B cell (primary cell): ENCODE measurements at regions of chr14 and their contacts with region 1.

Region 1: GRCh38 chr14:64503478-64504309 is at the start of gene ZBTB25:
- DNase-seq: peak; percentile 99
- ATAC-seq: peak; percentile 64
- H3K4me3 ChIP-seq: peak within 1 kb of the TSS; percentile 87 to 98 (median 95)
- H3K4me3 Mint-ChIP-seq: peak within 1 kb of the TSS; percentile 95
- H3K27ac ChIP-seq: peak within 1 kb of the TSS; percentile 99 to 100
- H3K27ac Mint-ChIP-seq: peak within 1 kb of the TSS; percentile 100
- H3K4me1 ChIP-seq: peaks cover 63 to 65% of the 10 kb centered on the region in 2 donors
- H3K4me1 Mint-ChIP-seq: peaks cover 61% of the 10 kb centered on the region
- H3K27me3 ChIP-seq: no peaks in the 10 kb centered on the region
- H3K27me3 Mint-ChIP-seq: no peaks in the 10 kb centered on the region
- CTCF ChIP-seq: no peak
- total RNA-seq, gene ZBTB25: 45.7 and 51.0 TPM in 2 replicates

Region 2: DNA sequence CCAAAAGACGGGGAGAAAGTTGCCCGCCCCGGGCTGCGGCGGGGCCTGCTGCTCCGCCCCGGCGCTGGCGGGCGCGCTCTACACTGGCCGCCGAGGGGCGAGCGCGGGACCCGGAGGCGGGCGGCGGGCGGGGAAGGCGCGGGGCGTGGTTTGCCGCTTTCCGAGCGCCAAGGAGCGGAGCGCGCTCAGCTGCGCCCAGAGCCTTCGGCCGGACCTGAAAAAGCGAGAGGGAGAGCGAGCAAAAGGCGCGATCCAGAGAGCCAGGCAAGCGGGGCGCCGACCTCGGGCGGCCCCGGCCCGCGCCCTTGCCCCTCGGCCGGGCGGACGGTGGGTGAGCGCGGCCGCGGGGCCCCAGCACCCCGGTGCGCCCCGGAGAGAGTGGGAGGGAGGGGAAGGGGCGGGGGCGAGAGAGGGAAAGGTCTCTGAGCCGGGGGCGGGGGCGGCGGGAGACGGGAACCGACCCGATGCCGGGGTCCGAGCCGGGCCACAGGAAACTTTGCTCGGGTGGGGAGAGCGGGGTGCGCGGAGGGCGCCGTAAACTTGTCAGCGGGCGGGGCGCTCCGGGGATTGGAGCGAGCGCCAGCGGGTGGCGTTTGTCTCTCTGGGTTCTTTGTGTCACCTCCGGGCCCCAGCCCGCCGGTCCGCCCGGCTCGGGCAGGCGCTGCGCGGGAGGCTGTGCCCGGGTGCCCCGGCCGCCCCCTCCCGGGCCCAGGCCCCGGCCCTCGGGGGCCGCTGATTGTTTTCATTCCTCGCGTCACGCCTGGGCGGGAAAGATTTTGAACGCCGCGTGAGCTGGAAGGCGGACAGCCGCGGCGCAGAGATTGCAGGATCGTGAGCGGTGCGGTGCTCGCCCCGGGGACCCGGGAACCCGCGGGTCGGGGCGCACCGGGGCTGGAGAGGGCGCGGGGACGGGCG is 650.6 kb before region 1 on chr14 and contains the start of gene SYNE2:
- CTCF ChIA-PET with region 1: no interaction called
- POLR2A ChIA-PET with region 1: no interaction called
- intact Hi-C with region 1: loop called (anchors 5 kb)
- DNase-seq: peak; percentile 89
- ATAC-seq: peak; percentile 84
- H3K4me3 ChIP-seq: peak within 1 kb of the TSS; percentile 46 to 72 (median 64)
- H3K4me3 Mint-ChIP-seq: peak within 1 kb of the TSS; percentile 94
- H3K27ac ChIP-seq: peak within 1 kb of the TSS; percentile 30 to 43
- H3K27ac Mint-ChIP-seq: peak within 1 kb of the TSS; percentile 95
- H3K4me1 ChIP-seq: peaks cover 13 to 14% of the 10 kb centered on the region in 2 donors
- H3K4me1 Mint-ChIP-seq: peaks cover 27% of the 10 kb centered on the region
- H3K27me3 ChIP-seq: peaks cover 0 to 6% (median 0%) of the 10 kb centered on the region in 4 experiments
- H3K27me3 Mint-ChIP-seq: no peaks in the 10 kb centered on the region
- CTCF ChIP-seq: peak; percentile 33
- total RNA-seq, gene SYNE2: 105 TPM in 2 replicates

Region 3: GRCh38 chr14:64338616-64339316 is 164.9 kb before region 1 on chr14:
- CTCF ChIA-PET with region 1: interaction called, 37 read pairs
- POLR2A ChIA-PET with region 1: interaction called, 8 read pairs
- intact Hi-C with region 1: loop called (anchors 1 kb)
- DNase-seq: peak; percentile 90
- ATAC-seq: peak; percentile 90
- H3K4me3 ChIP-seq: peak overlapping the region; percentile 28 to 90 (median 80)
- H3K4me3 Mint-ChIP-seq: peak overlapping the region; percentile 90
- H3K27ac ChIP-seq: peak overlapping the region; percentile 69 to 82
- H3K27ac Mint-ChIP-seq: peak overlapping the region; percentile 90
- H3K4me1 ChIP-seq: peaks cover 14 to 17% of the 10 kb centered on the region in 2 donors
- H3K4me1 Mint-ChIP-seq: peaks cover 26% of the 10 kb centered on the region
- H3K27me3 ChIP-seq: no peaks in the 10 kb centered on the region
- H3K27me3 Mint-ChIP-seq: no peaks in the 10 kb centered on the region
- CTCF ChIP-seq: no peak

Region 4: DNA sequence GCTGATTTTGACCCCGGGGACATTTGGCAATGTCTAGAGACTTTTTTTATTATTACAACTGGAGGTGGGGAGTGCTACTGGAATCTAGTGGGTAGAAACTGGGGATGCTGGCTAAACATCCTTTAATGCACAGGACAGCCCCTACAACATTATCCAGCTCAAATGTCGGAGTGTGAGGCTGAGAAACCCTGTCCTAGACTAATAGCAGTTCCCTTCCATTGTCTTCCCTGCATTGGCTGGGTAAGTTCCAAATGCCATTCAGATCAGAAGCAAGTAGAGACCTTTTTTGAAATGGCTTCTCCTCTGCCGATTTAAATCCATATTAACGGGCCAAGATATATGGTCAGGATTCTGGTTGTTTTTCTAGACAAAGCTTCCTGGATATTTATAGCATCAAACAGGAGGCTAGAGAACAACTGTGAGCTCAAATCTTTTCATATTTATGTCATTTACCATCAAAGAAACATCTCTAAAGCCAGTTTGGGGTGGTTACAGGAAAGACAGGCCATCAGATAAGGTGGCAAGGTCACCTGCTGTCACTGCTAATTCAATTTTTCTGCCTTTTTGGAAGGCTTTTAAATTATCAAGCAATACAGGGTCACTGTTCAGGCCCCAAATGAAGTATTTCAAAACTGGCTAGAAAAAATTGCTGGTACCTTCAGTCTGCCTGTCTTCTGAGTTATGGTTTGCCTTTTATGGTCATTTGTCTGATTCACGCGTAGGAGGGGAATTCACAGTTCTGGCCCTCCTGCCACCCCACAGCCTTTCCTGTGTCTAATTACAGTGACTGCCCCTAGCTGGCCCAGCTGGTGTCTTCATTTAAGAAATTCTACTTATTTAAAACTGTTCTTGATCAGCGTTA is 58.5 kb before region 1 on chr14:
- CTCF ChIA-PET with region 1: no interaction called
- POLR2A ChIA-PET with region 1: interaction called, 11 read pairs
- intact Hi-C with region 1: loop called (anchors 5 kb)
- DNase-seq: peak; percentile 77
- ATAC-seq: peak; percentile 93
- H3K4me3 ChIP-seq: peak overlapping the region in 1 of 5 experiments; percentile 43
- H3K4me3 Mint-ChIP-seq: peak overlapping the region; percentile 3
- H3K27ac ChIP-seq: peak overlapping the region; percentile 77 to 99
- H3K27ac Mint-ChIP-seq: peak overlapping the region; percentile 51
- H3K4me1 ChIP-seq: peaks cover 26 to 40% of the 10 kb centered on the region in 2 donors
- H3K4me1 Mint-ChIP-seq: peaks cover 47% of the 10 kb centered on the region
- H3K27me3 ChIP-seq: no peaks in the 10 kb centered on the region
- H3K27me3 Mint-ChIP-seq: no peaks in the 10 kb centered on the region
- CTCF ChIP-seq: no peak

Region 5: DNA sequence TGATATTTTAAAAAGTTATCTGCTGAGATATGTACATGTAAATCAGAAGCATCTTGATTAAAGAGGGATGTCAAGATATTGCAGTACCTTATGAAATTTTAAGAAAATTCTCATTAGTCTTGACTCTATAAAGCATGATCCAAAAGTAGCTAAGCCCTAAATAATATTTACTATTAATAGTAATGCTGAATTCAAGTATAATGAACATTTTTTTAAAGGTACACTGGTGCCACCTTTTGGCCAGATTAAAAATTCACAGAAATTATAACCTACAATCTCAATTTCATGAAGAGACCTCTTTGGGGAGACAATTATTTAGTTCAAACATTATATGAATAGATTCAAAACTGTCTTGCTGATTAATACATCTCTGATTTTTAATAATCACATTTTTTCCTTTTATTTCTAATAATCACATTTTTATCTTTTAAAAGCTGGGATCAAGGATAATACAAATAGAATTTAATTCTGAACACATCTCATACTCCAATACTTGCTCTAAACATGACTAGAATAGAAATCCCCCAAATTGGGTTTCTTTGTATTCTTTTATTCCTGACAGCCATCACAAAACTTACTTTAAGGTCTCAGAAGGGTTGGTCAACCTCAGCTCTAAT is 25.0 kb before region 1 on chr14:
- CTCF ChIA-PET with region 1: interaction called, 92 read pairs
- POLR2A ChIA-PET with region 1: no interaction called
- intact Hi-C with region 1: no loop called
- DNase-seq: peak; percentile 63
- ATAC-seq: no peak
- H3K4me3 ChIP-seq: no peak overlapping the region
- H3K4me3 Mint-ChIP-seq: no peak overlapping the region
- H3K27ac ChIP-seq: no peak overlapping the region
- H3K27ac Mint-ChIP-seq: no peak overlapping the region
- H3K4me1 ChIP-seq: no peaks in the 10 kb centered on the region
- H3K4me1 Mint-ChIP-seq: peaks cover 3% of the 10 kb centered on the region
- H3K27me3 ChIP-seq: no peaks in the 10 kb centered on the region
- H3K27me3 Mint-ChIP-seq: no peaks in the 10 kb centered on the region
- CTCF ChIP-seq: peak; percentile 85

Region 6: GRCh38 chr14:64636208-64636979 is 132.7 kb after region 1 on chr14:
- CTCF ChIA-PET with region 1: interaction called, 15 read pairs
- POLR2A ChIA-PET with region 1: no interaction called
- intact Hi-C with region 1: no loop called
- DNase-seq: peak; percentile 77
- ATAC-seq: peak; percentile 95
- H3K4me3 ChIP-seq: no peak overlapping the region
- H3K4me3 Mint-ChIP-seq: no peak overlapping the region
- H3K27ac ChIP-seq: no peak overlapping the region
- H3K27ac Mint-ChIP-seq: no peak overlapping the region
- H3K4me1 ChIP-seq: peaks cover 5 to 20% of the 10 kb centered on the region in 2 donors
- H3K4me1 Mint-ChIP-seq: peaks cover 11% of the 10 kb centered on the region
- H3K27me3 ChIP-seq: peaks cover 0 to 4% (median 0%) of the 10 kb centered on the region in 4 experiments
- H3K27me3 Mint-ChIP-seq: peaks cover 8% of the 10 kb centered on the region
- CTCF ChIP-seq: peak; percentile 96

Region 7: DNA sequence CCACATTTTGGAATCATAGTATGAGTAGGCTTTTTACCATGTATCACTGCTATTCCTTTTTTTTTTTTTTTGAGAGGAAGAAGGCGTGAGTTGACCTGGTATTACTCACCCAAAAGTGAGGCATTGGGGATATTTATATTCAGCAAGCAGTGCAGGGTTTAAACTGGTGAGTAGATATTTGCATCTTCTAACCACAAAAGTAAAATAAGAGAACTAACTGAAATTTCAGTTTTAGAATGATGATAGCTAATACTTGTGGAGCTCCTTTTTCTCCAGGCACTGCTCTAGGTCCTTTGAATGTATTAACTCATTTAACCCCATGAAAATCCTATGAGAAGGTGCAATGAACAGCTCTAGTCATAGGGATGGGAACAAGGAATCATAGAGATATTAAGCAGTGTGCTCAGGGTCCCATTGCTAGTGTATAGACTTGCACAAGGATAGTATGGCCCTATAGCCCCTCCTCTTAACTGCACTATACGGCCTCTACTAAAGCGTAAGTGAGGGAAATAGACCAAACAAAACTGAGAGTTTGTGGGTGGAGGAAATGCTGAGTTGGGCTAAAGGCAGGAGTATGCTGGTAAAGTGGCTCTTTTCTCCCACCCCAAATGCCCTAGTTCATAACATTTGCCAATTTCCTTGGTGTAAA is 702.9 kb after region 1 on chr14:
- CTCF ChIA-PET with region 1: no interaction called
- POLR2A ChIA-PET with region 1: no interaction called
- intact Hi-C with region 1: loop called (anchors 5 kb)
- DNase-seq: peak; percentile 82
- ATAC-seq: peak; percentile 59
- H3K4me3 ChIP-seq: peak overlapping the region in 4 of 5 experiments; percentile 1 to 41 (median 24)
- H3K4me3 Mint-ChIP-seq: peak overlapping the region; percentile 79
- H3K27ac ChIP-seq: peak overlapping the region; percentile 91
- H3K27ac Mint-ChIP-seq: peak overlapping the region; percentile 90
- H3K4me1 ChIP-seq: peaks cover 86 to 88% of the 10 kb centered on the region in 2 donors
- H3K4me1 Mint-ChIP-seq: peaks cover 82% of the 10 kb centered on the region
- H3K27me3 ChIP-seq: no peaks in the 10 kb centered on the region
- H3K27me3 Mint-ChIP-seq: no peaks in the 10 kb centered on the region
- CTCF ChIP-seq: no peak